ENCODE measurements at regions of chr12 and their contacts with region 1.

Region 1: DNA sequence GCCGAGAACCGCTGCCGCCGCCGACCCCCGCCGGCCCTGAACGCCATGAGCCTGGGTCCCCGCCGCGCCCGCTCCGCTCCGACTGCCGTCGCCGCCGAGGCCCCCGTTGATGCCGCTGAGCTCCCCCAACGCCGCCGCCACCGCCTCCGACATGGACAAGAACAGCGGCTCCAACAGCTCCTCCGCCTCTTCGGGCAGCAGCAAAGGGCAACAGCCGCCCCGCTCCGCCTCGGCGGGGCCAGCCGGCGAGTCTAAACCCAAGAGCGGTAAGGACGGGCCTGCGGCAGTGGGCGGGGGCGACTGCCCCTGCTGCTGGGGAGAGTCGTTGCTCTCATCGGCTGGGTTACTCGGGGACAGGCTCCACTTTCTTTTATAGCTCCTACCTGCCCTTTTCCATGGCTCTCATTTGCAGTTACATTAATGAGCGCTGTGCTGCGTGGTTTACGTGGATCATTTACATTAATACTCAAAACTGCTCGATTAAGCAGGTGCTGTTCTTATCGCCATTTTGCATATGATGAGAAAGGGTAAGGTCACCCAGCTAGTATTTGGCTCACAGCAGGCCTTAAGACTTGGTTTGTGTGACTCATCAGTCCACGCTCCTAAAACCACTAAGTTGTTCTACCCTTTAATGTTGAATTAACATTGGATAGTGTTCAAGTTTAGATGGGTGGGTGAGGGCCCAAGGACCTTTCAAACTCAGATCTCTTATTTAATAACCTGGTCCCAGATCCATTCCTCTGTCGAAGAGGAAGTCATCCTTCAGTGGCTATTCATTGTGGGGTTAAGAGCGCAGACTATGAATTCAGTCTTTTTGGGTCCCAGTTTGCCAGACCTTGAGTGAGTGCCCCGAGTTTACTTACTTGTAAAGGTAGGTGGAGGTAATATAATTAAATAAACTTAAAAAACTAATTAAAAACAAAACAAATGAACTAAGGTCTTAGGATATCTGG is 823 bp downstream of the RNF10 start:
- DNase-seq: peak; percentile 77
- H3K27ac ChIP-seq: peak overlapping the region; percentile 86
- CTCF ChIP-seq: no peak

Region 2: DNA sequence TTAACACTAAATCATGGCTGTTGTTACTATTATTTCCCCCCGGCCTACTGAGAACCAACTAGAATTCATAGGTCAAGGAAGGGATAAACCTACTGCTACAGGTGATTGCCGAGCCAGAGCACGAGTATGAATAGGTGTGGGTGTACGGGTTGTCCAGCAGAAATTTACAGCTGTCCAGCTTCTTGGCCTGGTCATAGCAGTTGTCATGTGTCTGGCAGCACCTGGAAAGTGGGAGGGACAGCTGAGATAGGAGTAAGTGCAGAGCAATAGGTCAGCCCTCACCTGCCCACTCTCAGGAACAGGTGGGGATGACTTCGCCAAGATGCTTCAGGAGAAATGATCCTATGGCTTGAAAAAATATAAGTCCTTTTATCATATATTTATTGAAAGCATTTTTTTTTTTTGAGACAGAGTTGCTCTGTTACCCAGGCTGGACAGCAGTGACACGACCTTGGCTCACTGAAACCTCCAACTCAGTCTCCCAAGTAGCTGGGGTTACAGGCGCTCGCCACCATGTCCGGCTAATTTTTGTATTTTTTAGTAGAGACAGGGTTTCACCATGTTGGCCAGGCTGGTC is 210.1 kb before region 1 on chr12:
- CTCF ChIA-PET with region 1: interaction called, 12 read pairs
- POLR2A ChIA-PET with region 1: no interaction called
- DNase-seq: no peak
- H3K27ac ChIP-seq: no peak overlapping the region
- CTCF ChIP-seq: no peak

Region 3: GRCh38 chr12:120514002-120514401 is 21.0 kb before region 1 on chr12:
- CTCF ChIA-PET with region 1: no interaction called
- POLR2A ChIA-PET with region 1: no interaction called
- DNase-seq: no peak
- H3K27ac ChIP-seq: no peak overlapping the region
- CTCF ChIP-seq: no peak

Measured in RWPE1 (cell line).